Sciatic nerve (tissue), 2 donors: ENCODE measurements at regions of chr9 and their contacts with region 1.

Region 1: DNA sequence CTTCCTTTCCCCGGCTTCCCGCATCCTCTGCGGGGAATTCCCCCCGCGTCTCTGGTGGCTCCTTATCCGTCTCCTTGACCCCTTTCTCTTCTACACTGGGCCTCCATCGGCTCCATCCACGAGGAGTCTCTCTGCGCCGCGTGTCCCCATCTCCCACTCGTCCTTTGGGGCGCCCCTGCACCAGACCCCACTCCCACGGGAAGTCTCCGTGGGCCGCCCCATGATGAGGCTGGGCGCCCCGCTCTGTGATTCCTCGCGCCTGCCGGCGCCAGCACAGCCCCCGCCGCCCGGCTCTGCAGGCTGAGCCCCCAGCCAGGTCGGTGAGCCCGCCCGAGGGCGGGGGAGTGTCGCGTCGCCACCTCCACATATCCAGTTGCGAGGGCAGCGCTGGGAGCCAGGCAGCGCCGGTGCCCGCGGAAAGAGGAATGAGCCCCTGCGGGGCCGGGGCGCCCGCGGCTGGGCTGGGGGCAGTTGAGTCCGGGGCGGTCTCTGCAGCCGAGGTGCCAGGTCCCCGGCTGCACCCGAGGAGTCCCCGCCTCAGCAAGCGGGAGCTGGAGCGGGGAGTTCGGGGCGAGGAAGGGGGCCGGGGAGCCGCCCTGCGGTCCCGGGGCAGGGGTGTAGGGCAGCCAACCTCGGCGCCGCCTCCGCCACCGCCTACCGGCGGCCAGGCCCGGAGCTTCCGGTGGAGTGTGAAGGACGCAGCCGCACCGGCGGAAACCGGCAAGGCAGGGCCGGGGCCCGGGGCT is 2.1 kb upstream of the TRAF1 start:
- DNase-seq: peak; percentile 87
- ATAC-seq: peak; percentile 85

Region 2: DNA sequence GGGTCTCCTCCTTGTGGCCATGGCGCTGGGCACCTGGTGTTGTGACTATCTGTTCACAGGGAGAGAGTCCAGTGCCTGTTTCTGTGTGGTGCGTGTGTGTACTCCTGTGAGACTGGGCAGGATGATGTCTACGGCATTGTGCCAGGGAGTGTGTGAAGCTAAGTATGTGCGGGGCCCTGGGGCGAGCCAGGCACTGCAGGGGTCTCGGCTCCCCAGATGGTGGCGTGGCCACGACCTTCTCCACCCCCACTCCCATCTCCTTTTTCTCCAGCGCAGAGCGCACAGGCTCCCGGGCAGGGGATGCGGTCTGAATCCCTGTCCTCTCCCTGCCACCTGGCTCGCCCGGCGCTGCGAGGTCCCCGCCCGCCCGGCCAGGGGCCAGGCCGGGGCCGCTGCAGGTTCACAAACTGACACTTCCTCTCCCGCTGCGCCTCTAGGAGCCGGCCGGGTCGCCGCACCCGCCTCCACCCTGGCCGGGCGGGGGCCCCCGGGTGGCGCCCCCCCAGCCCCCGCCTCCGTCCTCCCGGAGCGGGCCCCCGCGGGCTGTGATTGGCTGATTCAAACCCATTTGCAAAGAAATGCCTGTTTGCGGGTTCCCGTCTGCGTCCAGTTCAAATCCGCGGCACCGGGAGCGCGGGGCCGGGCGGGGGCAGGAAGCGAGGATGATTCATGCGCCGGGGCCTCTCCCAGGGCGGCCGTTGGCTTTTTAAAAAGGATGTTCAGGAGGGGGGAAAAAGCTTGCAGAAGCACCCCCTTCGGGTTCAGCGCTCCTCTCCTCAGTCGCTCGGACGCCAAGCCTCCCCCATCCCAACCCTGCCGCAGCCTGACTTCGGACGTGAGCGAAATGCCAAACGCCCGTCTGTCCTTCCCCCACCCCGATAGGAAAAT is 52.5 kb before region 1 on chr9:
- intact Hi-C with region 1: loop called (anchors 5 kb)
- DNase-seq: peak; percentile 90
- ATAC-seq: peak; percentile 75

Region 3: DNA sequence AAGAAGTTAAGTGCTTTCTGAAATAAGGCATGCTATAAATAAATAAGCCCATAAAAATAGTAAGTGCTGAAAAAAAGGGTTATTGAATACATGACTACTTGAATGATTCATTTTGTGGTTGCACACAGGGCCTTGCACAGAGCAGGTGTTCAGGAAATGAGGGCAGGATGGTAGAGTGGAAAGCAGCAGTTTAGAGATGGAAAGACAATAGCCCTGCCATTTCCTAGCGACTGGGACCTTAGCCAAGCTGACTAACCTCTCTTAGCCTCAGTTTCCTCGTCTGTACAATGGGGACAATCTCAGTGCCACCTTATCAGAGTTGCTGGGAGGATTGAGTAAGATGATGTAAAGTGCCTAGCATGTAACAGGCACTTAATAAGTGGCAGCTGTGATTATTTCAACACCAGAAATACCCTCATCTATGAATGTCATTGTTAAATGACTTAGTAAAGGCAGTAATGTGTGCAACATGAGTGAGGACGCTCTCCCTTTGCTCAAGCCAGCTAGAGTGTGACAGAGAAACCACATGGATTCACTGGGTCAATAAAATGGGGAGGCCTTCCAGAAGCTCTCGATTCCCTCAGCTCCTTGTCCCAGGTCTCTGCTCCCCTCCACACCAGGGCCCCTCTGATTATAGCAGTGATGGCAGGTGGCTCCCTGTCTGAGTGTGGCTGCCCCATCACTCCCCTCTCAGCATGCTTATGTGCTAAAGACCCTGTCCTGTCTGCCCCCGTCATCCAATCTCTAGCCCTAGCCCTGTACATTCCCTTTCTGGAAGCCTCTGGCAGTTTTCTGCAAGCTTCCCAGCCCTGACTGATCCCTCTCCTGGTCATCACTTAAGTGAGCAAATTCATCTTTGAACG is 35.7 kb before region 1 on chr9:
- intact Hi-C with region 1: no loop called
- DNase-seq: no peak
- ATAC-seq: no peak

Region 4: DNA sequence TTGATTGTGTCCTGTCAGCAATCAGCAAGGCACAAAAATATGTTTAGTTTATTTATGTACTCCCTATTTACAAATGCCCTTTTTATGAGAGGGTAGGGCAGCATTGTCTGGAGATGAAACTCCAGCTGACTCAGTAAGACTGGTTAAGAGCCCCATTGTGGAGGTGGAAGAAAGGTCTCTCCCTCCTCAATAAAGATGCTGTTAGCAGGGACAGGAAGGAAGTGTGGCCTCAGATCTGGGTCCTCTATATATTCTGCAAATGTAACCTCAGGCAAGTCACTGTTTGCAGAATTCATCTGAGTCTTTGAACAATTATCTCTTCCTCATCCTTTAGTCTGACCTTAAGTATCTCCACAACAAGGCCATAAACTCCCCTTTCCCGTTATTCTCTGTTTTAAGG is 46.3 kb after region 1 on chr9:
- intact Hi-C with region 1: no loop called
- DNase-seq: no peak
- ATAC-seq: no peak

Region 5: GRCh38 chr9:122297512-122297911 is 1368.9 kb after region 1 on chr9:
- intact Hi-C with region 1: no loop called
- DNase-seq: no peak
- ATAC-seq: no peak